Activated CD8-positive, alpha-beta memory T cell treated with anti-CD3 and anti-CD28 coated beads, Interleukin-2, amount 10 ng/mL, durations not matched to agents 7 days and 5 days (primary cell): ENCODE measurements at regions of chr14 and their contacts with region 1.

Region 1: DNA sequence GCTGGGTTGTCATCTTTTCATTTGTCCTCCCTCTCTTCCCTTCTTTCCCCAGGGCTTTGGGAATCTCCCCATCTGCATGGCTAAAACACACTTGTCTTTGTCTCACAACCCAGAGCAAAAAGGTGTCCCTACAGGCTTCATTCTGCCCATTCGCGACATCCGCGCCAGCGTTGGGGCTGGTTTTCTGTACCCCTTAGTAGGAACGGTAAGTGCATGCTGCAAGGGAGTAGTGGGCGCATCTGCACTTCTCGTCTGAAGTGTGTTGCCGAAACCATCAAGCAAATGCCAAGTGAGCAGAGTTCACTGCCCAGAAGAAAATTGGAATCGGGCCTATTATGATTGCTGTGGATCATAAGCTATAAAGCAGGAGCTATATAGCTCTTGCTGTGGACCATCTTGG is 10.6 kb upstream of the AKAP5 start:
- DNase-seq: no peak
- ATAC-seq: no peak
- H3K4me3 Mint-ChIP-seq: no peak overlapping the region
- H3K27ac Mint-ChIP-seq: no peak overlapping the region
- H3K4me1 Mint-ChIP-seq: peaks cover 31% of the 10 kb centered on the region
- H3K27me3 Mint-ChIP-seq: no peaks in the 10 kb centered on the region

Region 2: GRCh38 chr14:64438181-64438841 is 16.4 kb before region 1 on chr14:
- CTCF ChIA-PET with region 1: no interaction called
- DNase-seq: no peak
- ATAC-seq: peak; percentile 53
- H3K4me3 Mint-ChIP-seq: no peak overlapping the region
- H3K27ac Mint-ChIP-seq: peak overlapping the region; percentile 64
- H3K4me1 Mint-ChIP-seq: peaks cover 19% of the 10 kb centered on the region
- H3K27me3 Mint-ChIP-seq: no peaks in the 10 kb centered on the region

Region 3: GRCh38 chr14:64465191-64465822 is 10.6 kb after region 1 on chr14 and contains the start of gene AKAP5:
- CTCF ChIA-PET with region 1: interaction called, 10 read pairs
- DNase-seq: peak; percentile 71
- ATAC-seq: peak; percentile 91
- H3K4me3 Mint-ChIP-seq: peak within 1 kb of the TSS; percentile 79
- H3K27ac Mint-ChIP-seq: peak within 1 kb of the TSS; percentile 80
- H3K4me1 Mint-ChIP-seq: peaks cover 40% of the 10 kb centered on the region
- H3K27me3 Mint-ChIP-seq: no peaks in the 10 kb centered on the region
- total RNA-seq, gene AKAP5: 8.8 to 23.2 TPM